ENCODE measurements at regions of chr14 and their contacts with region 1.

Region 1: GRCh38 chr14:81164167-81164774 is 56.5 kb downstream of the GTF2A1 start:
- DNase-seq: peak; percentile 37
- H3K4me3 Mint-ChIP-seq: no peak overlapping the region
- H3K27ac Mint-ChIP-seq: no peak overlapping the region
- H3K4me1 Mint-ChIP-seq: peaks cover 27% of the 10 kb centered on the region
- H3K27me3 Mint-ChIP-seq: no peaks in the 10 kb centered on the region

Region 2: DNA sequence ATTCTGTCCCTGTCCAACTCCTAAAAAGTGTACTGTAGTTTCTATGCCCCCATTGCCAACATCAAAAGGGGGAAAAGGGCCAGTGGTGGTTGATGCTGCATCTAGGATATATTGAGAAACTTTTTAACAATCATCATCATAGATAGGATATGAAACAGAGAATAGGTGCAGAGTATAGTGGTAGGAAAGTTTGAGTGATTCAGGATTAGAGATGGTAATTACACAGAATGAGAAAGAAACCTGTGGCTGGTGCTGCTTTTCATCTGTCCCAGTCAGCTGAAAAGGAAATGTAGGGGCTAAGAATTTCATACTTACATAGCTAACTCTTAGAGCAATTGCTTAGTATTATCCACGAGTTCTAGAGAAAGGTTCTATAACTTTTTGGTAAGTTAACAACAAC is 11.1 kb before region 1 on chr14:
- intact Hi-C with region 1: loop called (anchors 1 kb)
- DNase-seq: no peak
- H3K4me3 Mint-ChIP-seq: no peak overlapping the region
- H3K27ac Mint-ChIP-seq: peak overlapping the region; percentile 5
- H3K4me1 Mint-ChIP-seq: peaks cover 14% of the 10 kb centered on the region
- H3K27me3 Mint-ChIP-seq: no peaks in the 10 kb centered on the region

Region 3: GRCh38 chr14:81219210-81219758 is 55.0 kb after region 1 on chr14:
- intact Hi-C with region 1: no loop called
- DNase-seq: peak; percentile 85
- H3K4me3 Mint-ChIP-seq: peak overlapping the region; percentile 100
- H3K27ac Mint-ChIP-seq: peak overlapping the region; percentile 100
- H3K4me1 Mint-ChIP-seq: peaks cover 36% of the 10 kb centered on the region
- H3K27me3 Mint-ChIP-seq: peaks cover 2% of the 10 kb centered on the region